Mammary epithelial cell (primary cell): ENCODE measurements at regions of chr4 and their contacts with region 1.

Region 1: GRCh38 chr4:165537028-165537648 is 158.3 kb downstream of the CPE start:
- DNase-seq: peak; percentile 37
- H3K4me3 ChIP-seq: no peak overlapping the region
- H3K27ac ChIP-seq: no peak overlapping the region
- H3K4me1 ChIP-seq: no peaks in the 10 kb centered on the region
- H3K27me3 ChIP-seq: no peaks in the 10 kb centered on the region
- CTCF ChIP-seq: peak; percentile 41 to 56

Region 2: GRCh38 chr4:165700855-165701254 is 163.7 kb after region 1 on chr4:
- CTCF ChIA-PET with region 1: interaction called, 3 read pairs
- dilution Hi-C with region 1: no loop called
- in situ Hi-C with region 1: no loop called
- intact Hi-C with region 1: loop called (anchors 1 kb)
- DNase-seq: no peak
- H3K4me3 ChIP-seq: no peak overlapping the region
- H3K27ac ChIP-seq: no peak overlapping the region
- H3K4me1 ChIP-seq: no peaks in the 10 kb centered on the region
- H3K27me3 ChIP-seq: no peaks in the 10 kb centered on the region
- CTCF ChIP-seq: peak; percentile 33 to 64

Region 3: GRCh38 chr4:165855191-165855590 is 318.1 kb after region 1 on chr4:
- CTCF ChIA-PET with region 1: no interaction called
- dilution Hi-C with region 1: no loop called
- in situ Hi-C with region 1: loop called in 1 of 2 experiments (anchors 25 kb)
- intact Hi-C with region 1: loop called (anchors 1 kb)
- DNase-seq: no peak
- H3K4me3 ChIP-seq: no peak overlapping the region
- H3K27ac ChIP-seq: no peak overlapping the region
- H3K4me1 ChIP-seq: peaks cover 5% of the 10 kb centered on the region
- H3K27me3 ChIP-seq: no peaks in the 10 kb centered on the region
- CTCF ChIP-seq: no peak

Region 4: GRCh38 chr4:166012129-166013078 is 475.3 kb after region 1 on chr4:
- CTCF ChIA-PET with region 1: no interaction called
- dilution Hi-C with region 1: no loop called
- in situ Hi-C with region 1: no loop called
- intact Hi-C with region 1: loop called (anchors 1 kb)
- DNase-seq: peak; percentile 73
- H3K4me3 ChIP-seq: no peak overlapping the region
- H3K27ac ChIP-seq: peak overlapping the region; percentile 75
- H3K4me1 ChIP-seq: peaks cover 12% of the 10 kb centered on the region
- H3K27me3 ChIP-seq: no peaks in the 10 kb centered on the region
- CTCF ChIP-seq: no peak

Region 5: DNA sequence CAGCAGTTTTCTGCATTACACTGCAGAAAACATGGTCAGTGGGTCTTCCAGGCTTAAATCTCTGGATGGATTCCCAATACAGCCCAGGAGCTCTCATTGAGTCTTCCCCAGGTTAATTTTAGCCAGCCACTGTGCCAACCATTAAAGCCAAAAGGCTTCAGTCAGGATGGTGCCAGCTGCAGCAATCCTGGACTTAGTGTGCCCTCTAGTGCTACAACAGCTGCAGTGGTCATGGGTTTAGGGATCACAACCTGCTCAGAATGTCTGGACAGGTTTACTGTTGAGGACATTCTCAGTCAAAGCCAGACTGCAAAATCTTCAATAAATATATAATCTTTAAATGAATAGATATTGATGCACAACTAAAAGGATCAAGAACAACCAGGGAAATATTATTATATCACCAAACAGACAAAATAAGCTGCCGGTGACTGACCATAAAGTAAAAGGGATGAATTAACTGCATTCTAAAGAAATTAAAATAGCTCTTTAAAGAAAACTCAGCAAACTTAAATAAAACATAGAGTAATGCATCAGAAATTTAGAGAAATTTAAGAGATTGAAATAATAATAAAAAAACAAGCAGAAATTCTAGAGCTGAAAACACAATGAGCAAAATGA is 1057.3 kb after region 1 on chr4:
- CTCF ChIA-PET with region 1: no interaction called
- dilution Hi-C with region 1: no loop called
- in situ Hi-C with region 1: loop called in 1 of 2 experiments (anchors 25 kb)
- intact Hi-C with region 1: loop called (anchors 2 kb)
- DNase-seq: peak; percentile 50
- H3K4me3 ChIP-seq: no peak overlapping the region
- H3K27ac ChIP-seq: no peak overlapping the region
- H3K4me1 ChIP-seq: no peaks in the 10 kb centered on the region
- H3K27me3 ChIP-seq: peaks cover 2% of the 10 kb centered on the region
- CTCF ChIP-seq: peak; percentile 92 to 98